ENCODE measurements at regions of chr9 and their contacts with region 1.

Region 1: DNA sequence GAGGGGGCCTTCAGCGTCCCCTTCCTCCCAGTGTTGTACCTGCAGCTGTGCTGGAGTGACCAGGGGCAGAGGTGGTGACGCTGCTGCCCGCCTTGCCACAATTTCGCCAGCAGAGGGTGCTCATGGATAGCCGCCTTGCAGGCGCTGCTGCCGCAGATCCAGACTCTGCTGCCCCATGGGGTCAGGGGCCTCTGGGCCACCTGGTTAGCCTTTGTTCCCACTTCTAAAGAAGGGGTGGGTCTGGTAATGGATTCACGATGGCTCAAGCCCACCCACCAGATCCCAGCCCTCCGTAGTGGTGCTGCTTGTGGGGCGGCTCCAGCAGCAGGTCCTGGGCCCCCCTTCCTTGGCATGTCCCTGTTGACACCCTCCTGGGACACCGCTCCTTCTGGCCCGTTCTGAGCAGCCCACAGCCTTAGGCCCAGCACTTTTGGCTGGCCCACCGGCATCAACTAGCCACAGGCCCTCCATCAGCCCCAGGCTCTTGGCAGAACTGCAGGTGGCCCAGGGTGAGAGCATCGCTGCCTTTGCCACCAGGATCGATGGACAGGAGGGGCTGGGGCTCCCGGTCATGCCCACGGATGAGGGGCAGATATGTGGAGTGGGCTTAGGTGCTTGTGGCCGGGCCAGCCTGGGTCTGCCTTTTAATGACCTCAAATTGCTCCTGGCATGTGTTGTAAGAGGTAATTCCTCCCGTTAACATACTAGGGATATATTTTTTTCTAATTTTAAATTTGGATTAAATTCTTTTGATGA is 57.2 kb downstream of the COL5A1 start:
- DNase-seq: peak; percentile 91

Region 2: DNA sequence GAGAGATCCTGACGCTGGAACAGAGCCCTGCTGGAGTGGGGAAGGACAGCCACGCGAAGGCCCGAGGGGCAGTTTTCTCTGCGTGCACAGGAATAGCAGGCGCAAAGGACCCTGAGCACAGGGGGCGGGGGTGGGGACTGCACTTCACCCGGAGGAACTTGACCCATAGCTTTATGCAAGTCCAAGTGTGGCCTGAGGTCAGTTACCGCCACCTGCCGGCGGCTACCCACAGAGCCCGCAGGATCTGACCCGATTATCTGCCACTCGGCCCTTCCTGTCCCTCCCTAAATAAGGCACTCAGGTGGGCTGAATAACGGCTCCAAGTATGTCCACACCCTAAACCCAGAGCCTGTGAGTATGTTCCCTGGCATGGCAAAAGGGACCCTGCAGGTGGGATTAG is 284.3 kb after region 1 on chr9:
- intact Hi-C with region 1: loop called in 1 of 2 experiments (anchors 5 kb)
- DNase-seq: peak; percentile 85

Measured in posterior vena cava (tissue), 2 donors.